PC-9 (cell line): ENCODE measurements at regions of chr13 and their contacts with region 1.

Region 1: DNA sequence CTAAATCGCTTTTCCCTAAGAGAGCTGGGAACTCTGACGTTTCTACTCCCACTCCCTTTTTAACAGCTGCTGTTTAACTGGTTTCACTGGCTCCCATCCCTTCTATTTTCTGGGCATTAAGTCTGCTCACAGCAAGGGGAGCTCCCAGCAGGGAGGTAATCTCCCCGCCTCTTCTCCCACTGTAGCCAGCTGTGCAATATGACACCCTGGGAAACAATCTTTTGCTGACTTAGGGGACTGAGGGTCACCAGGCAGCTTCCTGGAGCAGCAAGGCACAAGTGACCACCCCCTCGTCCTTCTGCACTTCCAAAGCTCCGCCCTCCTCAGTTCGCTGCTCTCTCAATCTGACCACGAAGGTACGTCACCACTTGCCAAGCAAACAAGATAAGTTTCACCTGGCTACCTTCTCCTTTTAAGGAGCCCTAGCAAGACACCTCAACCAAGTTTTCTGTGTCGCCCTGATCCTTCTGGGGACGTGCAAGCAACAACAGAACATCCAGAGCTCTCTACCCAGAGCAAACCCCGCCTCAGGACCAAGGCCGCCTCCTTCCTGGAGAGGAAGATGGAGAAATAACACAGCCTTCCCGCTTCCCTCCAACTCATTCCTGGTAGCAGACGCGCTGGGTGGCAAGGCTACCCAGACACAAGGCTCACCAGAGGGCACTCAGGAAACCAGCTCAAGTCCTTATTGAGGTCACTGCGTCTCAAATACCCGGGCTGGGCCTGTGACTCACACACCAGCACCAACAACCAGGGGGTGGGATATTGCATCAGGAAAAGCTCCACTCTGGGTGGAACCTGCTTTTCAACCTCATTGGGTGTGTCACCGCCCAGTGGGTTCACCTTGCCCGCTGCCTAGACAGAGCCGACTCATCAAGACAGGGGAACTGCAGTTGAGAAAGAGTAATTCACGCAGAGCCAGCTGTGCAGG is 92.4 kb downstream of the STK24 start:
- DNase-seq: peak; percentile 94 to 100
- H3K4me3 ChIP-seq: peak overlapping the region; percentile 59
- H3K27ac ChIP-seq: peak overlapping the region; percentile 99
- H3K4me1 ChIP-seq: peaks cover 57% of the 10 kb centered on the region
- H3K27me3 ChIP-seq: no peaks in the 10 kb centered on the region
- CTCF ChIP-seq: no peak

Region 2: GRCh38 chr13:98509271-98510155 is 25.0 kb after region 1 on chr13:
- CTCF ChIA-PET with region 1: interaction called, 7 read pairs
- POLR2A ChIA-PET with region 1: interaction called, 8 read pairs
- intact Hi-C with region 1: loop called (anchors 1 kb)
- DNase-seq: peak; percentile 71 to 91
- H3K4me3 ChIP-seq: peak overlapping the region; percentile 31; the same call in 1 of the 2 replicates
- H3K27ac ChIP-seq: peak overlapping the region; percentile 99
- H3K4me1 ChIP-seq: peaks cover 58% of the 10 kb centered on the region
- H3K27me3 ChIP-seq: no peaks in the 10 kb centered on the region
- CTCF ChIP-seq: no peak

Region 3: DNA sequence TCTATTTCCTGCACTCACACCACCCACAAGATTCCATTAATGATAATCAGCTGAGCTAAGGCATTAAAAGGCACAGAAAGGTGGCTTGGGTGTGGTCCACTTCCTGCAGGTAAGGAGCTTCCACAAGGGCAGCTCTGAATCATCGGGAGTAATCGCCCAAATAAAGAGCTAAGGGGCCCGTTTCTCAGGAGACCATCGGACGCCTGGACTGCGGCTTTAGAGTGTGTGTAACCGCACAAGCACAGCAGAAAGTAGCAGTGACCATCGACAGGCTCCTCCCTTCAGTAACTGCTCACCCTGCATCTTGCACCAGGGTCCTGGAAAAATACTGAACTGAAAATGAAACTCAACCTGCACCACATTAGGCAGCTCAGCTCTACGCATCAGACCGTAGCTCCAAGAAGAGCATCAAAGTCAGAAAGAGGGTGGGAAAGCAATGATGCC is 86.4 kb after region 1 on chr13:
- CTCF ChIA-PET with region 1: interaction called, 3 read pairs
- POLR2A ChIA-PET with region 1: no interaction called
- intact Hi-C with region 1: loop called (anchors 2 kb)
- DNase-seq: peak; percentile 68 to 98
- H3K4me3 ChIP-seq: peak overlapping the region; percentile 98; the same call in 1 of the 2 replicates
- H3K27ac ChIP-seq: peak overlapping the region; percentile 86
- H3K4me1 ChIP-seq: peaks cover 69% of the 10 kb centered on the region
- H3K27me3 ChIP-seq: no peaks in the 10 kb centered on the region
- CTCF ChIP-seq: no peak

Region 4: DNA sequence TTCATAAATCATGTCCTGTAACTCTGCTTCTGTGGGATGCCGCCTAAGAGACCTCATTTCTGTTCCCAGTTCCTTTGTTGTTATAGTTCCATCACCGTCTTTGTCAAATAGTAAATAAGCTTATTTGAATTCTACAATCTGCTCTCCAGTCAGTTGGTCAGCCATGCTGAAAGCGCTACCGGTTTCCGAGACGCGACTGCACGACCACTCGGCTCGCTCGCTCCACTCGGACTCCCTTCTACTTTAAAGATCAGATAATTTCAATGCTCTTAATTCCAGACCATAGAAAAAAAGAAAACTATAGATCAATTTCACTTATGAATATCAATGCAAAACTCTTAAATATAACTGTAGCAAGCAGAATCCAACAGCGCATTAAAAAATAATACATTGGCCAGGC is 156.5 kb after region 1 on chr13:
- CTCF ChIA-PET with region 1: no interaction called
- POLR2A ChIA-PET with region 1: no interaction called
- intact Hi-C with region 1: no loop called
- DNase-seq: no peak
- H3K4me3 ChIP-seq: no peak overlapping the region
- H3K27ac ChIP-seq: no peak overlapping the region
- H3K4me1 ChIP-seq: no peaks in the 10 kb centered on the region
- H3K27me3 ChIP-seq: no peaks in the 10 kb centered on the region
- CTCF ChIP-seq: no peak

Region 5: DNA sequence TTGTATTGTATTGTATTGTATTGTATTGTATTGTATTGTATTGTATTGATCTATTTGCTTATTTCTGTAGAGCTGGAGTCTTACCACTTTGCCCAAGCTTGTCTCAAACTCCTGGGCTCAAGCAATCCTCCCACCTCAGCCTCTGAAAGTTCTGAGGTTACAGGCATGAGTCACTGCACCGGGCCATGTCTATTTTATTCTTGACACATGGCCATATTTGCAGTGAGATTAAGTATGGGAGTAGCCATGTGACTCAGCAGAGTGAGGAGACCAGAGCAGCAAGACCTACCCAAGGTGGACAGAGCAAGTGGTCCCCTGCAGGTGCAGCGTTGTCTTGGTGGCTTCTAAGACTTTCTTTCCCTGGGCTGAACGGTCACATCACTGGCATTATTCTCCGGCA is 667.0 kb after region 1 on chr13:
- CTCF ChIA-PET with region 1: no interaction called
- POLR2A ChIA-PET with region 1: no interaction called
- intact Hi-C with region 1: loop called (anchors 2 kb)
- DNase-seq: peak; percentile 57 to 95
- H3K4me3 ChIP-seq: peak overlapping the region; percentile 26; the same call in 1 of the 2 replicates
- H3K27ac ChIP-seq: peak overlapping the region; percentile 90
- H3K4me1 ChIP-seq: peaks cover 57% of the 10 kb centered on the region
- H3K27me3 ChIP-seq: no peaks in the 10 kb centered on the region
- CTCF ChIP-seq: no peak